ENCODE measurements at regions of chr4 and their contacts with region 1.

Region 1: DNA sequence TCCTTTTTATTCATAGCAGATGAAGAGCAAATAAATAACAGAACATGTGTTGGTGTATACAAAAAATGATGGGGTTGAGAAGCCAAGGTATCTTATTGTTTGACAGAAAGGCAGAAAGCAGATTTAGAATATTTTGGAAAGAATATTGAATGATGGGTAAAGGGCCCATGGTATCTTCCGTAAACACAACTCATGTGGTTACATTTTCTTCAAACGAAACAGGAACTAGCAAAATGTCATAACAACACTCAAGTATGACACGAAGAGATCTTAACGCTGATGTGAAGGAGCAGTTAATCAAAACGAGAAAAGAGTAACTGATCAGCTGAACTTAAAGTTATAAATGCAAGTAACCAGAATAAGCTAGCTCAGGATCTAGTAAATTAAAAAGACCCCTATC is 195.7 kb upstream of the GK2 start:
- DNase-seq: no peak

Region 2: DNA sequence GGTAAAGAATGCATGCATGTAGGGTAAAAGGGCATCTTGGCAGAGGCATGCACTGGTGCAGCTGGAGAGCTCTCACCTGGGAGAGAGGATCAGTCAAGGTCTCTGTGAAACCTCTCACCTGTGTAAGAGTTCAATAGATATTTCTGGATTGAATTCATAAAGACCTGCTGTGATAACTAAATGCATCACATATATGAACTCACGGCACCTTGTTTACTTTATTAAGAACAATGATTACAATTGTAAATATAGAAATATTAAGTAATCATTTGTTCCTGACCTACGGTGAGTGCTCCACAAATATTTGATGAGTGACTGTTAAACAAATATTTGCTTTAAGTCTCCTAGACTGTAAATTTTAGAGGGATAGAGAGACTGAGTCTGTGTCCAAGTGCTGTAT is 578.5 kb before region 1 on chr4:
- CTCF ChIA-PET with region 1: no interaction called
- POLR2A ChIA-PET with region 1: no interaction called
- DNase-seq: no peak

Region 3: DNA sequence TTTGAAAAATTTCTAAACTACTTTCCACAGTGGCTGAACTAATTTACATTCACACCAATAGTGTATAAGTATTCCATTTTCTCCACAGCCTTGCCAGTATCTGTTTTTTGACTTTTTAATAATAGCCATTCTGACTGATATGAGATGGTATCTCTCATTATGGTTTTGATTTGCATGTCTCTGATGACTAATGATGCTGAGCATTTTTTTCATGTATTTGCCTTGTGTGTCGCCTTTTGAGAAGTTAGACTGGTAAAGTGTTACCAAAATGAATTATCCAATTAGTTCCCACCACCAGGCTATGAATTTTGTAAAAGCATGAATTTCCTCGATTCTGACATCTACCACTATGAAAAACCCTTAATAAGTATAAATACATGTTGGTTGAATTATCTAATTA is 46.5 kb after region 1 on chr4:
- CTCF ChIA-PET with region 1: interaction called, 10 read pairs
- POLR2A ChIA-PET with region 1: no interaction called
- DNase-seq: no peak